Activated T-helper 1 cell treated with anti-CD3 and anti-CD28 coated beads, Interleukin-12 subunit alpha, Interleukin-12 subunit beta, Interleukin-2, Interleukin-4 antibody, amounts not matched to agents 30 ng/mL and 10 ng/mL and 1 ng/mL, durations not matched to agents 14 hours and 24 hours and 36 hours (primary cell): ENCODE measurements at regions of chr1 and their contacts with region 1.

Region 1: DNA sequence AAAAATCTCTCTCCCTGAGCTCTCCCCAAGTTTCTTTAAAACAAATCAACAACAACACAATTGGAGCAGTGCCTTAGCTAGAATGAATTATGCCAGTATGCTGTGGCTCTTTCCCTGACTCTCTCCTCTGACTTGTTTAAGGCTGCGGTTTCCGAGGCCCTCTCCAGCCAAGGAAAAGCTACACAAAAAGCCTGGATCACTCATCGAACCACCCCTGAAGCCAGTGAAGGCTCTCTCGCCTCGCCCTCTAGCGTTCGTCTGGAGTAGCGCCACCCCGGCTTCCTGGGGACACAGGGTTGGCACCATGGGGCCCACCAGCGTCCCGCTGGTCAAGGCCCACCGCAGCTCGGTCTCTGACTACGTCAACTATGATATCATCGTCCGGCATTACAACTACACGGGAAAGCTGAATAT is 1.9 kb downstream of the S1PR1 start:
- DNase-seq: peak; percentile 79
- H3K4me3 Mint-ChIP-seq: peak overlapping the region; percentile 97
- H3K27ac Mint-ChIP-seq: peak overlapping the region; percentile 95
- H3K4me1 Mint-ChIP-seq: peaks cover 77% of the 10 kb centered on the region
- H3K27me3 Mint-ChIP-seq: no peaks in the 10 kb centered on the region

Region 2: GRCh38 chr1:100443811-100444571 is 794.7 kb before region 1 on chr1:
- intact Hi-C with region 1: loop called (anchors 5 kb)
- DNase-seq: peak; percentile 22
- H3K4me3 Mint-ChIP-seq: peak overlapping the region; percentile 61
- H3K27ac Mint-ChIP-seq: peak overlapping the region; percentile 95
- H3K4me1 Mint-ChIP-seq: peaks cover 91% of the 10 kb centered on the region
- H3K27me3 Mint-ChIP-seq: no peaks in the 10 kb centered on the region

Region 3: GRCh38 chr1:100941098-100941527 is 297.6 kb before region 1 on chr1:
- intact Hi-C with region 1: loop called (anchors 1 kb)
- DNase-seq: peak; percentile 17
- H3K4me3 Mint-ChIP-seq: peak overlapping the region; percentile 58
- H3K27ac Mint-ChIP-seq: peak overlapping the region; percentile 99
- H3K4me1 Mint-ChIP-seq: peaks cover 37% of the 10 kb centered on the region
- H3K27me3 Mint-ChIP-seq: peaks cover 3% of the 10 kb centered on the region

Region 4: DNA sequence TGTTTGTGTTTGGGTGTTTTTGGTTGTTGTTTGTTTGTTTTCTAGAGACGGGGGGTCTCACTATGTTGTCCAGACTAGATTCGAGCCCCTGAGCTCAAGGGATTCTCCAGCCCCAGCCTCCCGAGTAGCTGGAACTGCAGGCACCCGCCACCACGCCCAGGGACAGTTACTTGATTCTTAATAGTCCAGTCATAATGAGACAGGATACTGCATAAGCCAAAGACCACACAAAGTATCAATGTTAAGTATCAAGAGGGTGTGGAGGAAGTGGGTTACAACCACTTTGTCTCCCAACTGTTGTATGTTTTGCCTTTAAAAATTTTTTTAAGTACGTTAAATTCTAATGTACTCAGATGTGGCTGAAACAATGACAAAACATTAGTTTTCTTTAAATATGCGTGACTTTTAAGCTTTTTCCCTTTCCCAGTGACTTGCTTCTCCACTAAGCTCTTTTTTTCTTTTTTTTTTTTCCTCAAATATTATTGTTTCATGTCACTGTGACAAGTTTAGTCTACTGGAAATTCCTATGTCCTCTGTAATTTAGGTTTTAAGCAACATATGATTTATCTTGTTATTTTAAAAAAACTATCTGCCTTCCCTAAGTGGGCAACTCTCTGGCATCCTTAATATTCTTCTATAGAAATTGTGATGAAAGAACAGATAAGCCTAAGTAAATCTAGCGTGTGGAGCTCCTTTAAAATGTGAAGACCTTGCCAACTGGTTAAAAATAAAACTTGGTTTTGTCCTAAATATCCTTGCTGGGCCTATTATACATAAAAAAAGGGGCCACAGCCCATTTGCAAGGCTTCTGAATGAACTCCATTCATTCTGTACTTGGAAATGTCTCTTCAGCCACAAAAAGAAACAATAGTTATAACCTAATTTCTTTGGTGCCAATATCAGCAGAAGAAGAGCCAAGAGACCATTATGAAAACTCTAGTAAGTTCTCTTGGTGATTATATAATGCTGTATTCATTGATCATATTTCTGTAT is 156.9 kb before region 1 on chr1:
- intact Hi-C with region 1: loop called (anchors 1 kb)
- DNase-seq: peak; percentile 58
- H3K4me3 Mint-ChIP-seq: peak overlapping the region; percentile 38
- H3K27ac Mint-ChIP-seq: peak overlapping the region; percentile 61
- H3K4me1 Mint-ChIP-seq: peaks cover 57% of the 10 kb centered on the region
- H3K27me3 Mint-ChIP-seq: no peaks in the 10 kb centered on the region

Region 5: DNA sequence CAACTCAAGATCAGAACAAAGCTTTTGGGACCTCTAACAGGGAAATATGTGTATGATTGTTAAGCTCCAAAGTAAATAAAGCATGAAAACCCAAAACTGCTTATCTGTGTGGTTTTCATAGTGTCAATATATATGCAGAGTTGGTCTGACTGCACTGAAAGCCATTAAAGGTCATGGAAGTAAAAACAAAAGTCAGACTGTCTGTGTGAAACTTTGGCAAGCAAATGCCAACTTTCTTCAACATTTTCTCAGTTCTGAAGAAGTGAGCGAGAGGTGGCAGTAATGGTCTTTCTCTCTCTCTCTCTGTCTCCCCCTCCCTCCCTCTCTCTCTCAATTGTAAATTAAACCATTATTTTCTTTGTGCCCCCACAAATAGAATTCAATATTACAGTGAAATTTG is 101.9 kb before region 1 on chr1:
- intact Hi-C with region 1: loop called (anchors 1 kb)
- DNase-seq: peak; percentile 26
- H3K4me3 Mint-ChIP-seq: peak overlapping the region; percentile 30
- H3K27ac Mint-ChIP-seq: peak overlapping the region; percentile 38
- H3K4me1 Mint-ChIP-seq: peaks cover 63% of the 10 kb centered on the region
- H3K27me3 Mint-ChIP-seq: no peaks in the 10 kb centered on the region

Region 6: DNA sequence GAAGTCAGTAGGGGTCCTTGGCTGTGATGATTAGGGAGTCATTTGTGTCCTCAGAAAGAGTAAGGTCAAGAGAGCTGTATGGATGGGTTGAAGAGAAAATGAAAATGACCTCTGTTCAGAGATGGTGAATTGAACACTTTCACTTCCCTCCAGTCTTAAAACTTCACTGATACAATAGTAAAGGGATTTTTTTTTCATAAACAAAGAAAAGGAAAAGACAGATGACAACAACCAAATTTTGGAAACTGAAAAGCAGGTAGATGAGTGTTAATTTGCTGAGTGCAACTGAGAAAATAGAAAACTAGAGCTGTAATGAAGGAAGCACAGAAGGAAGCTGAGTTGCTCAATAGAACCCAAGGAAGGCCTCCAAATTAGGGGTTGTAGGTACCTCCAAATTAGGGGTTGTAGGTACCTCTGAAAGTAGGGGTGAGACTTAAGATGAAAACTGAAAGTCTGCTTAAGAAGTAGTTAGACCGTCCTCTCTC is 16.7 kb before region 1 on chr1:
- intact Hi-C with region 1: loop called (anchors 2 kb)
- DNase-seq: no peak
- H3K4me3 Mint-ChIP-seq: peak overlapping the region; percentile 58
- H3K27ac Mint-ChIP-seq: peak overlapping the region; percentile 56
- H3K4me1 Mint-ChIP-seq: peaks cover 26% of the 10 kb centered on the region
- H3K27me3 Mint-ChIP-seq: no peaks in the 10 kb centered on the region

Region 7: GRCh38 chr1:101371259-101371658 is 132.6 kb after region 1 on chr1:
- intact Hi-C with region 1: loop called (anchors 1 kb)
- DNase-seq: peak; percentile 33
- H3K4me3 Mint-ChIP-seq: peak overlapping the region; percentile 40
- H3K27ac Mint-ChIP-seq: no peak overlapping the region
- H3K4me1 Mint-ChIP-seq: peaks cover 12% of the 10 kb centered on the region
- H3K27me3 Mint-ChIP-seq: peaks cover 14% of the 10 kb centered on the region